Caco-2 (cell line): ENCODE measurements at regions of chr12 and their contacts with region 1.

Region 1: GRCh38 chr12:32918890-32919801 is 22.6 kb upstream of the PKP2 start:
- DNase-seq: peak in 1 of 2 experiments; percentile 62
- H3K4me3 ChIP-seq: no peak overlapping the region
- H3K4me3 Mint-ChIP-seq: no peak overlapping the region
- H3K27ac Mint-ChIP-seq: no peak overlapping the region
- H3K4me1 ChIP-seq: no peaks in the 10 kb centered on the region
- H3K4me1 Mint-ChIP-seq: no peaks in the 10 kb centered on the region
- H3K27me3 ChIP-seq: no peaks in the 10 kb centered on the region
- H3K27me3 Mint-ChIP-seq: no peaks in the 10 kb centered on the region
- CTCF ChIP-seq: peak; percentile 87 to 90

Region 2: DNA sequence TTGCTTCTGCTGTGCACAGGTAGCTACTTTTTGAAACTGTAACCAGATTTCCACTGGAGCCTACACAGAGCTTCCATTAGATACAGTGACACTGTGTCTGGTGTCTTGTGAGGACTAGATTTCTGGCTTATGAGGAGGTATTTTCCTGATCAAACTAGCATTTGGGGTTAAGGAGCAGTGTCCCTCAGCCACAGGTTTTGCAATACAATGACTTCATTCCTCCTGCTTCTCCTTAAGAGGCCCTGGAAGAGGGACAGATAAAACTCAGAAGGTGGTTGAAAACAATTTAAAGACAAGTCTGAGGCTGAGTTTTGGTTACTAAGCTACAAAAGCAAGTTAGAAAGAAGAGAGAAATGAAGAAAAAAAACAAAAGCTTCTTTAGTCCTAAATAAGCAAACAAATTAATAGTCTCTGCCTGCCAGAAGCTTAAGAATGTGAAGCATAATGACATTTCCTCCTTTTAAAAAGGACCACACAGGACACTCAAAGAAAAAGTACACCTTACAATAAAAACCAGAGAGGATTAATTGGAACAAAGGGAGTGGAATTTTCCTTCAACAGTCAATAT is 75.5 kb before region 1 on chr12:
- CTCF ChIA-PET with region 1: interaction called, 3 read pairs
- POLR2A ChIA-PET with region 1: no interaction called
- intact Hi-C with region 1: loop called (anchors 2 kb)
- DNase-seq: no peak
- H3K4me3 ChIP-seq: no peak overlapping the region
- H3K4me3 Mint-ChIP-seq: no peak overlapping the region
- H3K27ac Mint-ChIP-seq: peak overlapping the region; percentile 21
- H3K4me1 ChIP-seq: peaks cover 18% of the 10 kb centered on the region; the same call in 1 of the 2 replicates
- H3K4me1 Mint-ChIP-seq: peaks cover 13% of the 10 kb centered on the region
- H3K27me3 ChIP-seq: no peaks in the 10 kb centered on the region
- H3K27me3 Mint-ChIP-seq: no peaks in the 10 kb centered on the region
- CTCF ChIP-seq: no peak

Region 3: DNA sequence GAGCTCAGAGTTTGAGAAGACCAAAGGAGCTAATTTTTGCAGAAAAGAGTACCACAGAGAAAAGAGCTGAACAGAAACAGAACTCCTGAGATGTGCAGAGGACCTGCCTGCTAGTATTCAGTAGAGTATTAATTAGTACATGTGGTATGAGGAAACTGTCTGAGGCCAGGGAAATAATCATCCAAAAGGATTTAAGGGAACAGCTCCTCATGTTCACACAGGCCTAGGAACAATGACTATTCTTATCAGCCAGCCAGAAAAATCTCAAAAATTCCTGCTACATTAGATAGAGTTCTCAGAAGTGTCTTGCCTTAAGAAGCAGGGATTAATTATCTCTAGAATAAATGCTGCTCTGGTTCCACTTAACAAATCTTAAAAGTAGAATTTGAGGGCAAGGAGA is 59.0 kb before region 1 on chr12:
- CTCF ChIA-PET with region 1: no interaction called
- POLR2A ChIA-PET with region 1: no interaction called
- intact Hi-C with region 1: loop called (anchors 1 kb)
- DNase-seq: peak in 1 of 2 experiments; percentile 37
- H3K4me3 ChIP-seq: no peak overlapping the region
- H3K4me3 Mint-ChIP-seq: peak overlapping the region; percentile 28
- H3K27ac Mint-ChIP-seq: peak overlapping the region; percentile 51
- H3K4me1 ChIP-seq: peaks cover 42% of the 10 kb centered on the region
- H3K4me1 Mint-ChIP-seq: peaks cover 48% of the 10 kb centered on the region
- H3K27me3 ChIP-seq: no peaks in the 10 kb centered on the region
- H3K27me3 Mint-ChIP-seq: no peaks in the 10 kb centered on the region
- CTCF ChIP-seq: no peak

Region 4: GRCh38 chr12:32881107-32881506 is 38.0 kb before region 1 on chr12:
- CTCF ChIA-PET with region 1: interaction called, 3 read pairs
- POLR2A ChIA-PET with region 1: no interaction called
- intact Hi-C with region 1: loop called (anchors 5 kb)
- DNase-seq: no peak
- H3K4me3 ChIP-seq: no peak overlapping the region
- H3K4me3 Mint-ChIP-seq: no peak overlapping the region
- H3K27ac Mint-ChIP-seq: no peak overlapping the region
- H3K4me1 ChIP-seq: peaks cover 74% of the 10 kb centered on the region
- H3K4me1 Mint-ChIP-seq: peaks cover 52% of the 10 kb centered on the region
- H3K27me3 ChIP-seq: no peaks in the 10 kb centered on the region
- H3K27me3 Mint-ChIP-seq: no peaks in the 10 kb centered on the region
- CTCF ChIP-seq: no peak

Region 5: DNA sequence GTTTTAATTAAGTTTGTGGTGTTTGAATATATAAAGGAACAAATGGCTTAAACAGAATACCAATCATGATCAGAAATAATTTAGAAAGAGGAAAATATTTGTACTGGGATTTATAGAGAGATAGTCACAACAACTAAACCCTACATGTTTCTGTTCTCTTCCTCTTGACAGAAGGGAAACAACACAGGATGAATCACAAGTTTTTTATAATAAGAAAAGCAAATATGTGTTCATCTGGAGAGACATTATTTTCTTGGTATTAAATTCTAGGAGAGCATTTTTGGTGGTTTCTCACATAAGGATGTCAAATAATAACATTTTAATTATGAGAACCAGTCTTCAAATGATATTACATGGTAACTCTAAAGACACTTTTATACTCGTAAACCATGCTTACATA is 210.4 kb after region 1 on chr12:
- CTCF ChIA-PET with region 1: no interaction called
- POLR2A ChIA-PET with region 1: no interaction called
- intact Hi-C with region 1: no loop called
- DNase-seq: no peak
- H3K4me3 ChIP-seq: no peak overlapping the region
- H3K4me3 Mint-ChIP-seq: no peak overlapping the region
- H3K27ac Mint-ChIP-seq: no peak overlapping the region
- H3K4me1 ChIP-seq: no peaks in the 10 kb centered on the region
- H3K4me1 Mint-ChIP-seq: no peaks in the 10 kb centered on the region
- H3K27me3 ChIP-seq: no peaks in the 10 kb centered on the region
- H3K27me3 Mint-ChIP-seq: no peaks in the 10 kb centered on the region
- CTCF ChIP-seq: no peak

Region 6: DNA sequence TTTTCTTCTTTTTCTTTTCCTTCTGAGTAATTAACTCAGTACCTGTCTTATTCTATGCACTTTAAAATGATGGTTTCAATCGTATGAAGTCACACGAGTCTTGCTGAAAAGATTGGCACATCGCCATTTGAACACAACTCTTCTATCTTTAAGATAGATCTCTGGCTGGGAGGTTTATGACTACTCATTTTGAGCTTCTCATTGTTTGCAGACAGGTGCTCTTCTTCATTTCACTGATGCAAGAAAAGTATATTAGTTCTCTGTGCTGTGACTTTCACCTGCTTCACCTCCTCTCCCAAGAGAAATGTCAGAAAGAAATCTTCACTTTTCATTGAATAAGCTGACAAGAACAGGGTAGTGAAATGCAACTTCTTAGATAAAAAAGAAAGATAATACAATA is 920.1 kb after region 1 on chr12:
- CTCF ChIA-PET with region 1: no interaction called
- POLR2A ChIA-PET with region 1: no interaction called
- intact Hi-C with region 1: no loop called
- DNase-seq: no peak
- H3K4me3 ChIP-seq: no peak overlapping the region
- H3K4me3 Mint-ChIP-seq: no peak overlapping the region
- H3K27ac Mint-ChIP-seq: no peak overlapping the region
- H3K4me1 ChIP-seq: no peaks in the 10 kb centered on the region
- H3K4me1 Mint-ChIP-seq: no peaks in the 10 kb centered on the region
- H3K27me3 ChIP-seq: no peaks in the 10 kb centered on the region
- H3K27me3 Mint-ChIP-seq: no peaks in the 10 kb centered on the region
- CTCF ChIP-seq: no peak